Calu3 (cell line): ENCODE measurements at regions of chr10 and their contacts with region 1.

Region 1: GRCh38 chr10:28393966-28394568 is 91.2 kb upstream of the MPP7 start:
- DNase-seq: peak; percentile 65
- H3K4me3 Mint-ChIP-seq: no peak overlapping the region
- H3K27ac Mint-ChIP-seq: no peak overlapping the region
- H3K4me1 Mint-ChIP-seq: peaks cover 9% of the 10 kb centered on the region
- H3K27me3 Mint-ChIP-seq: peaks cover 2% of the 10 kb centered on the region
- CTCF ChIP-seq: peak; percentile 88

Region 2: DNA sequence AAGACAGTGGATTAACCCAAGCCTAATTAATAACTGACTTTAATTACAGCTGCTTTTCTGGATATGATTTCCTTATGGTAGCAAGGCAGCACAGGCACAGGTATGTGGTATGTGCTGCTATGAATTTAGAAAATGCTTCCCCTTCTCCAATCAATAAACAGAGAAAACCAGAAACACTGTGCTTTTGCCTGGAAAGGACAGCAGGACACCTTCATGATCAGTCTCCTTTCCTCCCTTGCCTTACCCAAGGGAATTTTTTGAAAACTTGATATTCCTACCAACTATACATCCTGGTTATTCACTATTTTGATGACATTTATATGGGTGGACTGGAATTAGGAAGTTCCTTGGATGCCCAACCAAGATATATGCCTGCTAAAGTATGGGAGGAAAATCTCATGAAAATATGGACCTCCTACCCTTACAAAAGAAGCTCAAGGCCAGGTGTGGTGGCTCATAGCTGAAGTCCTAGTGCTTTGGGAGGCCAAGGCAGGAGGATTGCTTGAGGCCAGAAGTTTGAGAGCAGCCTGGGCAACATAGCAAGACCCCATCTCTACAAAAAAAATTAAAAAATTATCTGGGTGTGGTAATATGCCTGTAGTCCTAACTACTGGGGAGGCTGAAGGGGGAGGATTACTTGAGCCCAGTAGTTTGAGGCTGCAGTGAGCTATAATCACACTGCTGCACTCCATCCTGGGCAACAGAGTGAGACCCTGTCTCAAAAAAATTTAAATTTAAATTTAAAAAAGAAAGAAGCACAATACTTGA is 32.5 kb after region 1 on chr10:
- CTCF ChIA-PET with region 1: interaction called, 11 read pairs
- intact Hi-C with region 1: no loop called
- DNase-seq: no peak
- H3K4me3 Mint-ChIP-seq: no peak overlapping the region
- H3K27ac Mint-ChIP-seq: no peak overlapping the region
- H3K4me1 Mint-ChIP-seq: no peaks in the 10 kb centered on the region
- H3K27me3 Mint-ChIP-seq: peaks cover 17% of the 10 kb centered on the region
- CTCF ChIP-seq: no peak